H1 (cell line): ENCODE measurements at regions of chr1 and their contacts with region 1.

Region 1: GRCh38 chr1:54791880-54792522 is 9.1 kb downstream of the TTC22 start:
- DNase-seq: peak in 1 of 2 experiments; percentile 94
- H3K4me3 ChIP-seq: no peak overlapping the region
- H3K27ac ChIP-seq: no peak overlapping the region
- H3K4me1 ChIP-seq: peaks cover 9 to 26% (median 18%) of the 10 kb centered on the region in 4 experiments
- H3K27me3 ChIP-seq: no peaks in the 10 kb centered on the region
- CTCF ChIP-seq: peak; percentile 62 to 86 (median 77)
- EP300 ChIP-seq: no peak
- POLR2A ChIP-seq: no peak
- RAD21 ChIP-seq: peak; percentile 88 to 91

Region 2: GRCh38 chr1:54681358-54681757 is 110.6 kb before region 1 on chr1:
- CTCF ChIA-PET with region 1: interaction called, 70 read pairs
- POLR2A ChIA-PET with region 1: no interaction called
- DNase-seq: no peak
- H3K4me3 ChIP-seq: no peak overlapping the region
- H3K27ac ChIP-seq: no peak overlapping the region
- H3K4me1 ChIP-seq: peaks cover 0 to 9% (median 3%) of the 10 kb centered on the region in 4 experiments; a peak in 3 of 7 replicates
- H3K27me3 ChIP-seq: no peaks in the 10 kb centered on the region
- CTCF ChIP-seq: no peak
- EP300 ChIP-seq: no peak
- POLR2A ChIP-seq: no peak
- RAD21 ChIP-seq: no peak

Region 3: DNA sequence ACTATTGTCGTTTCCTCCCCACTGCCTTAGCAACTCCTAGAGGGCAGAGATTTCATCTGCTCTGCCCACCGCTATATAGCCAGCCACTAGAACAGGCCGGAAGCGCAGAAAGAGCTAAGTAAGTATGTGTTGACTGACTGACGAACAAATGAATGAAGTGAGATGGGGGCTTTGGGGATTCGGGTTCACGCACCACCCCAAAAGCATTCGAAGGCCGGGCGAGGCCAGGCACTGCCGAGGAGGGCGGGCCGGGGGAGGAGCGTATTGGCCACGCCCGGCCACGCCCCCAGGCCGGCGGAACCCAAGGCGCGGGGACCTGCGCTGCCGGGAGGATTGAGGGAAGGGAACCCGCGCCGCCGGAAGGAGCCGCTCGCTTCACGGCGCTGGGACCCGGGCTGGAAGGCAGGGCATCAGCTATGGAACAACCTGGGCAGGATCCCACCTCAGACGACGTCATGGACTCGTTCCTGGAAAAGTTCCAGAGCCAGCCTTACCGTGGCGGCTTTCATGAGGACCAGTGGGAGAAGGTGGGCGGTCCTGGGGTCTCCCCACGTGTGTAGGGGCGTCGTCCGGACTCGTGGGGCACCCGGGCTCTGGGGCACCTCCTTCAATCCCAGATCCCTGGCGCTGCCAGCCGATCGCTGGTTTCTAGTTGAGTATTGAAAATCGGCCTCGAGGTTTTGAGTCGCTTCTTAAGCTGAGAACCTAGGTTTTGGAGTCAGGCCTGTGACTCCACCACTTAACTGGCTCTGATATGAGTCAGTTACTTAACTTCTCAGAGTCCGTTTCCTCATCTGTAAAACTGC is 76.3 kb before region 1 on chr1 and contains the start of gene TTC4:
- CTCF ChIA-PET with region 1: interaction called, 22 read pairs
- POLR2A ChIA-PET with region 1: interaction called, 3 read pairs
- DNase-seq: peak; percentile 46 to 92
- H3K4me3 ChIP-seq: peak within 1 kb of the TSS; percentile 58 to 95 (median 94)
- H3K27ac ChIP-seq: peak within 1 kb of the TSS; percentile 72
- H3K4me1 ChIP-seq: no peaks in the 10 kb centered on the region; a peak in 1 of 7 replicates
- H3K27me3 ChIP-seq: peaks cover 0 to 3% (median 0%) of the 10 kb centered on the region in 4 experiments; a peak in 3 of 7 replicates
- CTCF ChIP-seq: no peak
- EP300 ChIP-seq: 0 out of 3 replicates have a peak, but pooled peaks of 1 of the 2 experiments have one; percentile 46
- POLR2A ChIP-seq: peak; percentile 76 to 94
- RAD21 ChIP-seq: peak; percentile 14 to 17; a peak in 1 of 4 replicates
- total RNA-seq, gene TTC4: 24.2 and 25.1 TPM in 2 replicates

Region 4: GRCh38 chr1:54743416-54744226 is 48.4 kb before region 1 on chr1:
- CTCF ChIA-PET with region 1: interaction called, 19 read pairs
- POLR2A ChIA-PET with region 1: interaction called, 3 read pairs
- DNase-seq: no peak
- H3K4me3 ChIP-seq: no peak overlapping the region
- H3K27ac ChIP-seq: no peak overlapping the region
- H3K4me1 ChIP-seq: no peaks in the 10 kb centered on the region
- H3K27me3 ChIP-seq: no peaks in the 10 kb centered on the region
- CTCF ChIP-seq: no peak
- EP300 ChIP-seq: no peak
- POLR2A ChIP-seq: no peak
- RAD21 ChIP-seq: no peak

Region 5: DNA sequence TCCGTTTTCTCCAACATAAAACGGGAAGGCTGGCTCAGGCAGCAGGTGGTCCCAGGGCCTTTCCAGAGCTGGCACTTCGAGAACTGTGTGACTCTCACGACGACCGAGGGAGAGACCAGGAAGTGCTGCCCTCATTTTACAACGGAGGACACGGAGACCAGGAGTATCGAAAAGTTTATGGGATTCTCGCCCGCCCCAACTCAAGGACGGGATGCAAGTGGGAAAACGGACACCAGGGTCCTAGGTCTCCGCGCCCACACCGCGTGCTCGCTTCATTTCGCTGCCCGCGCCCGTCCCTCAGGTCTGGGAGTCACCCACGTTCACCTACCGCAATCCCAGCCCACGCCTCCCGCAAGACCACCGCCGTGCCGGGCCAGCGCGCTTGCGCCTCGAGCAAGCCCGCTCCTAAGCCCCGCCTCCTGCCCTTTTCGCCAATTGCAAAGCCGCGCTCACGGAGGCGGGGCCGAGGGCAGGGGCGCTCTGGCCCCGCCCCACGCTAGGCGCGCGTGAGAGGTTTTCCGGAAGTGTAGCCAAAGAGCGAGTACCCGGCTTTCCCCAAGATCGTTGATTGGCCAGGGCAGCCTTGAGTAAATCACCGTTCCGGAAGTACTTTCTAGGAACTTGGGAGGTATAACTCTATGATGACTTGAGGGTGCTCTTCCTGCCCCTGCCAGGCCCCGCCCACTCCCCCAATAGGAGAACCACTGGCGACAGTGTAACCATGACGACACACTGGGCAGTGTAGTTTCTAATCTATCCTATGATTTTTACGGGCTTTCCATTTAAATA is 27.7 kb before region 1 on chr1 and contains the start of gene PARS2:
- CTCF ChIA-PET with region 1: interaction called, 43 read pairs
- POLR2A ChIA-PET with region 1: interaction called, 4 read pairs
- DNase-seq: peak; percentile 95 to 97
- H3K4me3 ChIP-seq: peak within 1 kb of the TSS; percentile 71 to 93 (median 84)
- H3K27ac ChIP-seq: peak within 1 kb of the TSS; percentile 70
- H3K4me1 ChIP-seq: no peaks in the 10 kb centered on the region; a peak in 2 of 7 replicates
- H3K27me3 ChIP-seq: no peaks in the 10 kb centered on the region
- CTCF ChIP-seq: peak in 1 of 3 experiments; percentile 9; a peak in 1 of 4 replicates
- EP300 ChIP-seq: no peak
- POLR2A ChIP-seq: peak; percentile 77 to 96
- RAD21 ChIP-seq: no peak; a peak in 1 of 4 replicates
- total RNA-seq, gene PARS2: 10.0 and 10.4 TPM in 2 replicates

Region 6: DNA sequence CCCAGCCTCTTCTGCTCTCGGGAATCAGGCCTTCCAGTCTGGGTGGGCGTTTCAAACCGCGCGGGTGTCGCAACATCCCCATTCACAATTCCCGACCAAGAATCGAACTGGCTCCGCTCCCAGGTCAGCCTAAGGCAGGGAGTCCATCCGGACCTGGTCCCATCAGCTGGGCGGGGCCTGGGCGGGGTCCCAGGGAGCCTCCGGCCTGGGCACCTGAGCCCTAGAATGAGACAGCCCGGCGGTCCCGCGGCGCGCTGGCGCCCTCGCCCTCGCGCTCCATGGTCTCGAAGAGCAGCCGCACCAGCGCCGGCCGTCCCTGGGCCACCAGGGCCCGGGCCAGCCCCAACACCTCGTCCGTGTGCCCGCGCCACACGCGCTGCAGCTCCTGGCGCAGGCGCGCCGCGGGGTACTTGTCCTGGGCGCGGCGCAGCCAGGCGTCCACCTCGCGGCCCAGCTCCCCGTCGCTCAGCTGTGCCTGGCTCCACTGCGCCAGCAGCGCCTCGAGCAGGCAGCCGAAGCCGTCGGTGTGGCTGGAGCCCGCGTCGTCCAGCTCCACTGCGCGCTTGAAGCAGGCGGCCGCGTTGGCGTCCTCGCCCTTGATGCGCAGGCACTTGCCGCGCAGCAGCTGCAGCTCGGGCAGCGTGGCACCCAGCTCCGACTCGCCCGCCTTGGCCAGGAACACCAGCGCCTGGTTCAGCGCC is 10.8 kb before region 1 on chr1:
- CTCF ChIA-PET with region 1: interaction called, 31 read pairs
- POLR2A ChIA-PET with region 1: interaction called, 3 read pairs
- DNase-seq: peak; percentile 33 to 78
- H3K4me3 ChIP-seq: peak overlapping the region; percentile 3 to 51 (median 24); a peak in 6 of 8 replicates
- H3K27ac ChIP-seq: no peak overlapping the region
- H3K4me1 ChIP-seq: no peaks in the 10 kb centered on the region; a peak in 1 of 7 replicates
- H3K27me3 ChIP-seq: peaks cover 15 to 26% (median 25%) of the 10 kb centered on the region in 4 experiments; a peak in 6 of 7 replicates
- CTCF ChIP-seq: no peak
- EP300 ChIP-seq: no peak
- POLR2A ChIP-seq: no peak
- RAD21 ChIP-seq: no peak